ENCODE measurements at regions of chr2 and their contacts with region 1.

Region 1: DNA sequence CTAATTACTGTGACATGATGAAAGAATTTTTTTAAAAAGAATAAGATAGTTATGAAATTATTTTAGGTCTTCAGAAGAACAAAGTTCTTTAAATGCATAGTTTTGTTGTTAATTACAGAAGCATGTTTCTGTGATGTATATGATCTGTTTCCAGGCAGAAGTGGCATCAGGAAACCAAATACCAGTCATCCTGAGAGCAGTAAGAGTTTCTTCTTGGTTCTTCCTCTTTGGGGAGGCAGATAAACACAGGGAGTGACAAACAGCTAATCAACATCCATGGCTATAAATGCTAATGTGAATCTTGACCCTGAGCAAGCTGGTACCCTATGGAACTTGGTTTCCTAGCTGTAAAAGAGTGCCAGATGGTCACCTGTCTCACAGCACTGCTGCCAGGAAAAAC is 29.2 kb downstream of the WIPF1 start:
- DNase-seq: no peak
- H3K4me3 Mint-ChIP-seq: no peak overlapping the region
- H3K27ac Mint-ChIP-seq: peak overlapping the region; percentile 38
- H3K4me1 Mint-ChIP-seq: peaks cover 40% of the 10 kb centered on the region
- H3K27me3 Mint-ChIP-seq: no peaks in the 10 kb centered on the region

Region 2: DNA sequence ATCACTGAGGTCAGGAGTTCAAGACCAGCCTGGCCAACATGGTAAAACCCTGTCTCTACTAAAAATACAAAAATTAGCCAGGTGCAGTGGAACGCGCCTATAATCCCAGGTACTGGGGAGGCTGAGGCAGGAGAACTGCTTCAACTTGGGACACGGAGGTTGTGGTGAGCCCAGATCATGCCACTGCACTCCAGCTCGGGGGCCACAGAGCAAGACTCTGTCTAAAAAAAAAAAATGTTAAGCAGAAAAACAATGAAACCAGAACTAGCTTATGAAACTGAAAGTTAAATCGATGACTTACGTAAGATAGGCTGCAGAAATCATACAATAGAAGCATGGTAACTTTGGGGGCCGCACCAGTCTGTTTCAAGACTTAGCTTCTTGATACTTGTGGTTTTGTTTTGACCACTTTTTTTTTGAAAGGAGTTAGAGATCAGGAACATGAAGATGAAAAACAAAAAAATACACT is 75.4 kb before region 1 on chr2:
- intact Hi-C with region 1: loop called (anchors 5 kb)
- DNase-seq: peak; percentile 52
- H3K4me3 Mint-ChIP-seq: peak overlapping the region; percentile 68
- H3K27ac Mint-ChIP-seq: peak overlapping the region; percentile 92
- H3K4me1 Mint-ChIP-seq: peaks cover 54% of the 10 kb centered on the region
- H3K27me3 Mint-ChIP-seq: no peaks in the 10 kb centered on the region

Region 3: GRCh38 chr2:174546581-174547506 is 21.6 kb before region 1 on chr2:
- intact Hi-C with region 1: no loop called
- DNase-seq: peak; percentile 31
- H3K4me3 Mint-ChIP-seq: no peak overlapping the region
- H3K27ac Mint-ChIP-seq: no peak overlapping the region
- H3K4me1 Mint-ChIP-seq: peaks cover 2% of the 10 kb centered on the region
- H3K27me3 Mint-ChIP-seq: peaks cover 8% of the 10 kb centered on the region